ENCODE measurements at regions of chr3 and their contacts with region 1.

Region 1: DNA sequence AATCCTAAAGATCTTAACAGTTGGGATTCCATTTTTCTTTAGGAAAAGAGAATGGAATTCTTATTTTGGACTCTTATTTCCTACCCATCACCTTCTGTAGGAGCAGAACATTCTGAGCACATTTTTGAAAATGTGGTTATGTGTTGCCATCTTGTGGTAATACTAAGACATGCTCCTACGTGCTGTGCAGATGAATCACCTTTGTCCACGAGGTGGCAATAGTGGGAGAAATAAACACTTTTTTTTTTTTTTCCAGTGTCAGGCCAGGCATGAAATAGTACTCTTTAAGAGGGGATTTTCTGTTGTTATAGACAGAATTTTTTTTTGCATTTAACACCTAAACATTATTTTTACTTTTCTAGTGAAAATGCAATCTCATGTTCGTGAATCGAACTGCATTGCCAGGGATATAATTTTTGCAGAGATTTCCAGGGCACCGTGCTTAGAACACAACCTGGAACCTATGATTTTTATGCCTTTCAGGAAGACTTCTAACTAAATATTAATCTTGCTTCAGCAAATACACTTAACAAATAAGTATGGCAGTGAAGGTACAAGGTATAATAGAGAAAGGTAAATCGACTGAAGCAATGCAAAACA is 196.6 kb downstream of the GAP43 start:
- ATAC-seq: peak; percentile 87 to 98 (median 93)
- H3K4me3 ChIP-seq: no peak overlapping the region
- H3K27ac ChIP-seq: no peak overlapping the region
- H3K4me1 ChIP-seq: no peaks in the 10 kb centered on the region

Region 2: DNA sequence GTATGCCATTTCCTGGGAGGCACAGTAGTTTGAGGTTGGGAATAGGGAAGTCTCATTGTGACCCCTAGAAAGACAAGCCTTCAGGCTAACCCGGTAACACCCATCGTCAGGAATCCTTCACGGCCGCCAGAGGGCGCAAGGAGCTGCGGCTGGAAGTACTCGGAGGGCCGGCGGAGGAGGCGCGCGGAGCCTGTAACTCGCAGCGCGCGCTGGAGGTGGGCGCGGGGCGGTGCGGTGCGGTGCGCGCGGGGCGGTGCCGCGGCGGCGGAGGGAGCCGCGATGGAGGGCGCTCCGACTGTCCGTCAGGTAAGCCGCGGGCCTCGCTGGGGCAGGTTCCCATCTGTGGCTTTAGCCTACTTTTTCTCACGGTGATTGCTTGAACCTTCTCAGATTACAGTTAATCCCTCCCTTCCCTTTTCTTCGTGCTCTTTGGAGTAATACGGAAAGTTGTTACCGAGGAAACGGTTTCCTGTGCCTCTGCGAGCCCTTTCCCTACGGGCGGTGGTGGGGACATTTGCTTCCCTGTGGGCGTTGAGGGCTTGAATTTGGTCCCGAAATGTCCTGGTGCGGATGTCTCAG is 1981.2 kb before region 1 on chr3 and contains the start of gene GRAMD1C:
- in situ Hi-C with region 1: loop called in 1 of 9 experiments (anchors 25 kb)
- ATAC-seq: peak; percentile 97 to 100 (median 99)
- H3K4me3 ChIP-seq: peak within 1 kb of the TSS; percentile 40 to 76 (median 50)
- H3K27ac ChIP-seq: no peak within 1 kb of the TSS
- H3K4me1 ChIP-seq: no peaks in the 10 kb centered on the region
- total RNA-seq, gene GRAMD1C: 0.45 to 6.1 (median 2.6) TPM

Region 3: GRCh38 chr3:114362815-114363214 is 1457.1 kb before region 1 on chr3:
- in situ Hi-C with region 1: loop called in 2 of 9 experiments (anchors 25 kb)
- ATAC-seq: peak in 3 of 8 experiments; percentile 28 to 63 (median 42)
- H3K4me3 ChIP-seq: no peak overlapping the region
- H3K27ac ChIP-seq: no peak overlapping the region
- H3K4me1 ChIP-seq: peaks cover 9 to 14% of the 10 kb centered on the region in 2 donors

Region 4: GRCh38 chr3:115092220-115092791 is 727.6 kb before region 1 on chr3:
- in situ Hi-C with region 1: loop called in 1 of 9 experiments (anchors 25 kb)
- ATAC-seq: peak; percentile 98 to 100 (median 100)
- H3K4me3 ChIP-seq: no peak overlapping the region
- H3K27ac ChIP-seq: no peak overlapping the region
- H3K4me1 ChIP-seq: peaks cover 1 to 2% of the 10 kb centered on the region in 2 donors

Region 5: GRCh38 chr3:115239717-115240116 is 580.2 kb before region 1 on chr3:
- in situ Hi-C with region 1: loop called in 1 of 9 experiments (anchors 25 kb)
- ATAC-seq: peak; percentile 97 to 99 (median 99)
- H3K4me3 ChIP-seq: peak overlapping the region in 1 of 5 donors; percentile 3
- H3K27ac ChIP-seq: peak overlapping the region; percentile 53 to 79
- H3K4me1 ChIP-seq: peaks cover 27% of the 10 kb centered on the region in 2 donors

Measured in motor neuron (in vitro differentiated cells).